MCF 10A (cell line): ENCODE measurements at regions of chr3 and their contacts with region 1.

Region 1: GRCh38 chr3:58305882-58306711 is at the starts of genes HTD2 and RPP14:
- DNase-seq: peak; percentile 97
- H3K4me3 Mint-ChIP-seq: peak within 1 kb of the TSS; percentile 96
- H3K27ac Mint-ChIP-seq: peak within 1 kb of the TSS; percentile 99
- H3K4me1 Mint-ChIP-seq: no peaks in the 10 kb centered on the region
- H3K27me3 Mint-ChIP-seq: peaks cover 8% of the 10 kb centered on the region
- CTCF ChIP-seq: peak; percentile 66
- total RNA-seq, gene HTD2: 10.1 and 11.5 TPM in 2 replicates
- total RNA-seq, gene RPP14: 19.0 and 20.0 TPM in 2 replicates

Region 2: GRCh38 chr3:57951066-57951882 is 354.8 kb before region 1 on chr3:
- CTCF ChIA-PET with region 1: interaction called, 3 read pairs
- POLR2A ChIA-PET with region 1: no interaction called
- intact Hi-C with region 1: loop called (anchors 10 kb)
- DNase-seq: peak; percentile 75
- H3K4me3 Mint-ChIP-seq: no peak overlapping the region
- H3K27ac Mint-ChIP-seq: peak overlapping the region; percentile 49
- H3K4me1 Mint-ChIP-seq: peaks cover 19% of the 10 kb centered on the region
- H3K27me3 Mint-ChIP-seq: no peaks in the 10 kb centered on the region
- CTCF ChIP-seq: no peak

Region 3: DNA sequence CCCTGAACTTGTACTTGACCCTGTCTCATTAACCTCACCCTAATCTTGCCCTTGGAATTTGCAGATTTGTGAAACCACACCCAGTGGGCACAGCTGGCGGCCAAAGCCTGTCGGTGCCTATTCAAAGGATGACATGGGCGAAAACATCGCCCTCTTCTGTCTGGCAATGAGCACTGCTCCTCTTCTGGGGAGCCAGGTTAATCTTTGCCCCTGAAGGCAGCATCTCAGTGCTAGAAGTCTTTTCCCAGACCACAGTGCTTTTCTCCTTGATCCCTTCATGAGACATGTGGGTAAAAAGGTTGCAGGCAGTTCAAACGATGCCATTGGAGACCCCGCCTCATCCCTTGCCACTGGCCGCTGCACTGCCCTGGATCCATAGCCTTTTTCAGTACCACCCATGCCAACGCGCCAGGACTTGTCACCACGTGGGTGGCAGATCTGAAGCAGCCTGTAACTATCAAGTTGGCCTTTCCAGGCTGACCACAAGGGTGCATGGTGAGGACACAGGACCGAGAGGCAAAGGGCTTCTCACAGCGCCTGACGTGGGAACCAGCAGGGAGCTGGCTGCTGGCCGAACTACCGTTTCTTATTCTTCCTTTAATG is 88.8 kb before region 1 on chr3:
- CTCF ChIA-PET with region 1: interaction called, 58 read pairs
- POLR2A ChIA-PET with region 1: interaction called, 23 read pairs
- intact Hi-C with region 1: no loop called
- DNase-seq: peak; percentile 94
- H3K4me3 Mint-ChIP-seq: peak overlapping the region; percentile 28
- H3K27ac Mint-ChIP-seq: peak overlapping the region; percentile 10
- H3K4me1 Mint-ChIP-seq: peaks cover 25% of the 10 kb centered on the region
- H3K27me3 Mint-ChIP-seq: no peaks in the 10 kb centered on the region
- CTCF ChIP-seq: peak; percentile 70

Region 4: DNA sequence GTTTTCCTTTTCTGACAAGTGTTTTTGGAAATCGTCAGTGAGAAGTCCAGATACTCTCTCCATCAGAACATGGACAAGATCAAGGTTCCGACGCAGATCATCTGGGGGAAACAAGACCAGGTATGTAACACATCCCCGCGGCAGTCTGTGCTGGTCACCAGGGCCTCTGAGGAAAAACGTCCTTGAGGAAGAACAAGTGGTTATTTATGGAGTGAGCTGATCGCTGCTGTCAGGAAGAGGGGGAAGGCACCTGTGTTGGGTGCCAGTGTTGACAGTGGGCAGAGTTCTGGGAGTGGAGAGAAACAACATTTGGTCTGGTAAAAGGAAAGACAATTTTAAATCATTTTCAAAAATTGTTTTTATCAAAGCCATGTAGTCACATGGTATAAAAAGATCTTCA is 20.8 kb before region 1 on chr3:
- CTCF ChIA-PET with region 1: interaction called, 13 read pairs
- POLR2A ChIA-PET with region 1: no interaction called
- intact Hi-C with region 1: no loop called
- DNase-seq: no peak
- H3K4me3 Mint-ChIP-seq: no peak overlapping the region
- H3K27ac Mint-ChIP-seq: no peak overlapping the region
- H3K4me1 Mint-ChIP-seq: no peaks in the 10 kb centered on the region
- H3K27me3 Mint-ChIP-seq: no peaks in the 10 kb centered on the region
- CTCF ChIP-seq: no peak

Region 5: GRCh38 chr3:58324391-58325390 is 18.6 kb after region 1 on chr3:
- CTCF ChIA-PET with region 1: interaction called, 11 read pairs
- POLR2A ChIA-PET with region 1: interaction called, 5 read pairs
- intact Hi-C with region 1: no loop called
- DNase-seq: no peak
- H3K4me3 Mint-ChIP-seq: no peak overlapping the region
- H3K27ac Mint-ChIP-seq: no peak overlapping the region
- H3K4me1 Mint-ChIP-seq: no peaks in the 10 kb centered on the region
- H3K27me3 Mint-ChIP-seq: no peaks in the 10 kb centered on the region
- CTCF ChIP-seq: no peak

Region 6: DNA sequence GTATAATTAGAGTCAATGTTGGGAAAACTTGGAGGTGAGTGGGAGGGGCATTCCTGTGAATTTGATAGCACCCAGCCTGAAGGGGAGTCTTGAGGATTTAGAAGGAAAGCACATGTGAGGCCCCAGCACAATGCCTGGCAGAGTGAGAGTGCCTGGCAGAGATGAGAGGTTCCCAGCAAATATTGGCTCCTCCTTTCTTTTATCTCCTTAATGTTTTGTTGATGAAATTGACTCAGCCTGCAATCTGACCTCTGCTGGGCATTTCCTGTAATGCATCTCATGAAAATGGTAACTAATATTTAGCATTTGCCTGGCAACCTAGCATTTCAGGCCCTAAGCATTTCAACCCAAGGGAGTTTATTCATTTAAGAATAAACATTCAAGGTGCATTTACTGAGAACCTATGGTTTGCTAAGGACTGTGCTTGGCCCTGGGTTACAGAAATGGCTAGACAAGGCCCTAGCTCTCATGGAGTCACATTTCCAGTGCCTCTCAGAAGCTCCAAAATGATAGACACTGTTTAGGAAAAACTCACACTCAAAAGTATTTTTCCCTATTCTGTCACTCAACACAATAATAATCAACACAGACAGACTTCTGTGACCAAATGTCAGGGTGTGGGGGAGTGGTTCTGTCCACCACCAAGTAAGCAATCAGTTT is 108.6 kb after region 1 on chr3:
- CTCF ChIA-PET with region 1: interaction called, 32 read pairs
- POLR2A ChIA-PET with region 1: interaction called, 8 read pairs
- intact Hi-C with region 1: loop called (anchors 1 kb)
- DNase-seq: peak; percentile 74
- H3K4me3 Mint-ChIP-seq: no peak overlapping the region
- H3K27ac Mint-ChIP-seq: no peak overlapping the region
- H3K4me1 Mint-ChIP-seq: peaks cover 5% of the 10 kb centered on the region
- H3K27me3 Mint-ChIP-seq: no peaks in the 10 kb centered on the region
- CTCF ChIP-seq: peak; percentile 66

Region 7: GRCh38 chr3:58532794-58533220 is 226.7 kb after region 1 on chr3:
- CTCF ChIA-PET with region 1: interaction called, 16 read pairs
- POLR2A ChIA-PET with region 1: interaction called, 5 read pairs
- intact Hi-C with region 1: loop called (anchors 1 kb)
- DNase-seq: peak; percentile 79
- H3K4me3 Mint-ChIP-seq: no peak overlapping the region
- H3K27ac Mint-ChIP-seq: no peak overlapping the region
- H3K4me1 Mint-ChIP-seq: peaks cover 27% of the 10 kb centered on the region
- H3K27me3 Mint-ChIP-seq: no peaks in the 10 kb centered on the region
- CTCF ChIP-seq: peak; percentile 95